Posterior vena cava (tissue), 2 donors: ENCODE measurements at regions of chr4 and their contacts with region 1.

Region 1: DNA sequence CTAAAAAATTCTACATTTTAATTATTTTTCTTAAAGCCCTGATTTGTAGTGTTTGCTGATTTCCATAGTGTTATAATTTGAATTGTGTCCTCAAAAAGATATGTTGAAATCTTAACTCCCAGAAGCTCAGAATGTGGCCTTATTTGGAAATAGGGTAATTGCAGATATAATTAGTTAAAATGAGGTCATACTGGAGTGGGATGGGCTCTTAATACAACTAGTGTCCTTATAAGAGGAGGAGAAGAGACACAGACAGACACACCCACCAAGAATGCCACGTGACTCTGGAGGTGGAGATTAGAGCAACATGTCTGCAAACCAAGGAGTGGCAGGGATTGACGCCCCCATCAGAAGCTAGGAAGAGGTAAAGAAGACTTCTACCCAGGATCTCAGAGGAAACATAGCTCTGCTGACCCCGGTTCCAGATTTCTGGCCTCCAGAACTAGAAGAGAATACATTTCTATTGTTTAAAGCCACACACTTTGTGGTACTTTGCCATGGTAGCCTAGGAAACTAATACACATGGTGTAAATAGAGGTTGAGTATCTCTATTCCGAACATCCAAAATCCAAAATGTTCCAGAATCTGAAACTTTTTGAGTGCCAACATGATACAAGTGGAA is 70.5 kb upstream of the IRF2 start:
- DNase-seq: no peak

Region 2: GRCh38 chr4:184267673-184268583 is 277.0 kb before region 1 on chr4:
- intact Hi-C with region 1: loop called in 1 of 2 experiments (anchors 5 kb)
- DNase-seq: peak; percentile 83

Region 3: GRCh38 chr4:184282251-184282713 is 262.6 kb before region 1 on chr4:
- intact Hi-C with region 1: loop called in 1 of 2 experiments (anchors 10 kb)
- DNase-seq: no peak